Activated CD8-positive, alpha-beta T cell treated with anti-CD3 and anti-CD28 coated beads for 36 hours (primary cell): ENCODE measurements at regions of chr11 and their contacts with region 1.

Region 1: DNA sequence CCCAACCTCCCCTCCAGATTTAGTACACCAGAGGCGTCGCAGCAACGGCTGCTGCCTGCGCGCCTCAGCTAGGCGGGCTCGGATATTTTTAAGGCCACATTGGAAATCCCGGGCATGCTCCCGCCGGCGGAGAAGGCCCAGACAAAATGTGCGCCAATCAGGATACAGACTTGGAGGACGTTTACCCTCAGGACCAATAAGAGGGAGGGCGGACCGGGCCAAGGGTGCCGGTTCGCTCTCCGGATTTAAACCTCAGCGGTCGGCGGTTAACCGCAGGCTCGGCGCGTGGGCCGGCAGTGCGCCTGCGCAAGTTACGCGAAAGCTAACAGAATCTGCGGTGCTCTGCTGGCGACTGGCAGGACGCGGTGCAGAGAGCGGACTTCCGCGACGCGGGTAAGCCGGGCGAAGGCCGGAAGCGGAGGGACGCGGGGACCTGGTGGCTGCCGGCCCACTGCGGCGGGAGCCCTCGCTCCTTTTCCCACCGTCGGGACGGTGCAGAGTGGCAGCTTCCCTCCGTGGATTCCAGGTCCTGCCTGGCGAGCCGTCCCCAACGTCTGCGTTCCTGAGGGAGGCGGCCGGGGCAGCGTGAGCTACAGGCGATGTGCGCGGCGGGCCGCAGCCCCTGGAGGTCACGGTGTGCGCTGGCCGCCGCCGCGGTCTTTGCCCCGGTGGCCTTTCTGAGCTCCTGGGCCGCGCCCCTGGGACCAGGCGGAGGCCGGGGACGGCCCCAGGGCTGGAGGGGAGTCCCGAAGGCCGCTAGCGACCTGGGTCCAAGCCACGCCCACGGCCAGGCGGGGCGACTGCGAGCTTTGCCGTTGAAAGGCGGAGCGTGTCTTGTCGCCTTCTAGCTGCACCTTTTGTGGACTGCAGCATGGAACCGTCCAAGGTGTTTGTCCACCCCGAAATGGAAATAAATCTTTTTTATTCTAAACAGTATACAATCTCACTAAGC is at the start of gene HYLS1:
- DNase-seq: peak; percentile 96
- ATAC-seq: peak; percentile 89
- H3K4me3 Mint-ChIP-seq: peak within 1 kb of the TSS; percentile 76
- H3K27ac Mint-ChIP-seq: peak within 1 kb of the TSS; percentile 90
- H3K4me1 Mint-ChIP-seq: peaks cover 25% of the 10 kb centered on the region
- H3K27me3 Mint-ChIP-seq: no peaks in the 10 kb centered on the region
- CTCF ChIP-seq: no peak
- total RNA-seq, gene HYLS1: 4.6 to 5.2 TPM

Region 2: DNA sequence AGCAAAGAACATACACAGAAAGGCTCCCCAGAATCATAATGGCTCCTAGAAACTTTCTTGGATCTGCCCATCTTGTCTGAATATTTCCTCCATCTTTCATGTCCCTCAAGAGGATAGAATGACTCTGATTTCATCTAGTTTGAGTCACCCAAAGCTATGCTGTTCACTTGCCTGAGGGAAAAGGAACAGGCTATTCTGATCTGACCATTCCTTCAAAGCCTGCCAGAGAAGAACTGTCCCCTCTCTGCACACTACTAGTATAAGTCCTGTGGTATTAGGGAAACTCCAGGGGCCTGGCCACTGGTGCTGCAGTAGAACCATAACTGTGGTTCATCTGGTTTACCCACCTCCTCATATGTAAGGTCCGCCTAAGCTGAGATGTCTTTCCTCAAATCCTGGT is 144.0 kb before region 1 on chr11:
- CTCF ChIA-PET with region 1: no interaction called
- POLR2A ChIA-PET with region 1: no interaction called
- intact Hi-C with region 1: no loop called
- DNase-seq: no peak
- ATAC-seq: no peak
- H3K4me3 Mint-ChIP-seq: no peak overlapping the region
- H3K27ac Mint-ChIP-seq: no peak overlapping the region
- H3K4me1 Mint-ChIP-seq: no peaks in the 10 kb centered on the region
- H3K27me3 Mint-ChIP-seq: peaks cover 8% of the 10 kb centered on the region
- CTCF ChIP-seq: no peak

Region 3: GRCh38 chr11:125902927-125903710 is 15.5 kb after region 1 on chr11 and contains the start of gene PUS3:
- CTCF ChIA-PET with region 1: interaction called, 7 read pairs
- POLR2A ChIA-PET with region 1: interaction called, 21 read pairs
- intact Hi-C with region 1: no loop called
- DNase-seq: peak; percentile 94
- ATAC-seq: peak; percentile 91
- H3K4me3 Mint-ChIP-seq: peak within 1 kb of the TSS; percentile 97
- H3K27ac Mint-ChIP-seq: peak within 1 kb of the TSS; percentile 97
- H3K4me1 Mint-ChIP-seq: peaks cover 34% of the 10 kb centered on the region
- H3K27me3 Mint-ChIP-seq: peaks cover 16% of the 10 kb centered on the region
- CTCF ChIP-seq: no peak
- total RNA-seq, gene PUS3: 15.4 to 15.5 TPM